ENCODE measurements at regions of chr14 and their contacts with region 1.

Region 1: GRCh38 chr14:44961604-44962333 is at the starts of genes KLHL28 and TOGARAM1:
- DNase-seq: peak; percentile 100
- H3K4me3 ChIP-seq: peak within 1 kb of the TSS; percentile 74
- CTCF ChIP-seq: no peak

Region 2: GRCh38 chr14:45003924-45004323 is 42.2 kb after region 1 on chr14:
- in situ Hi-C with region 1: no loop called
- DNase-seq: no peak
- H3K4me3 ChIP-seq: no peak overlapping the region
- CTCF ChIP-seq: no peak

Region 3: DNA sequence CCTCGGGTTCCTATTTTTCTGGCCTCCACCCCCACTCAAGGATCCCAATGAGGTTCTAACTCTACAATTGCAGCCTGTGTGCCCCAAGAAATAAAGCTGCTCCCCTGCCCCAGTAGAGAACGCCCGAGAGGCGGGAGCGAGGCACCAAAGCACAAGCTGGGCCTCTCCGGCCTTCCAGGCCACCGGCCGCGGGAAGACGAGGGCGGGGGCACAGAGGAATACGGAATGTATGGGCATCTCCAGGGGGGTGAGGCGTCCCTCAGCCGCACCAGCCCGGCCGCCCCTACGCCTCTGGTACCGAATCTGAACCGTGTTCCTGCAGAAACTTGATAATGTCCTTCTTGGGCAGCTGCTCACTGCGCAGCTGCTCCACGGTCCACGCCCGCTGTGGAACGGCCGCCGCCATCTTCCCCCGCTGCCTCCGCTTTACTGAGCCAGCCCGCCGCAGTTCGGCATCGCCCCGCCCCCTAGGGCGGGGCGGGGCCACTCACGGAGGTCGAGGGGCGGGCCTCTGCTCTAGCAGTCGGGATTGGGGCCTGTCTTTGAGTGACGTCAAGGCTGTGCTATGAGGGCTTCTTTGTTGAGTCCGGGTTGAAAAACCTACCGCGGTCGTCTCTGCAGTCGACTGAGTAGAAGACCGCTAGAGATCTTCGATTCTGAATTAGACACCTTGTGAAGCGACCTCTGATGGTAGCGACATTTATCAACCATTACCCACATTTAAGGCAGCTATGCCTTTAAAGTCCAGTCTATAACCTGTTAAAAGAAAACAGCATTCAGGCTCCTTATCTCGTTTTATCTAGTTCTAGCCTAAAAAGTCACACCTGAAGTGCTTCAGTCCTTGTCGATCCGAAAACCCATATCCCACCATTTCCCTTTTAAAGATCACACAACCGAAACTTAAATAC is 172.5 kb after region 1 on chr14 and contains the start of gene FKBP3:
- in situ Hi-C with region 1: loop called (anchors 25 kb)
- DNase-seq: peak; percentile 97
- H3K4me3 ChIP-seq: peak within 1 kb of the TSS; percentile 79
- CTCF ChIP-seq: peak; percentile 18

Measured in astrocyte of the cerebellum (primary cell).